ENCODE measurements at regions of chr2 and their contacts with region 1.

Region 1: DNA sequence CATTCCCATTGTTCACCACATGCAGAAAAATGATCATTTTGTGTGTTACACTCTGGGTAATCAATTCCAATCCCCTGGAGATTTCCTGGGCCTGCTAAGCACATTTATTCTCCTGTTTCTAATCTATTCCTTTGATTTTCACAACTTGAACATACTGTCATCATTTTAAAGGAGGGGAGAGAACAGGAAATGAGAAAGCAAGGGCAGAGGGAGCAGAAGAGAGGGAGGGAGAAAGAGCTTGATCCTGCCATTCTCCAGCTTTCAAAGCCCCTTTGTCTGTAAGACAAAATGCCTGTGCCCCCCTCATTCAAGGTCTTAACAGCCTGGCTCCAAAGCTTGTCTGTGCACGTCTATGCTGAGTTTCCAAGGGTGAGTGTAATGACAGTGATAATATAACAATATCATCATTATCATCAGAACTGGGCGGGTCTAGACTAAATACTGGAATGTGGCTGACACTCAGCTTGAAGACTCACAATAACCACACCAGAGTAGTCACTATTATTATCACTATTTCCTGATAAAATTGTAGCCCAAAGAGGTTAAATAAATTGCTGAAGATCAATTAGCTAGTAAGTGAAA is 164.4 kb upstream of the KLHL29 start:
- DNase-seq: no peak
- ATAC-seq: no peak
- H3K4me3 ChIP-seq: no peak overlapping the region
- H3K27ac ChIP-seq: no peak overlapping the region
- H3K4me1 ChIP-seq: no peaks in the 10 kb centered on the region
- H3K27me3 ChIP-seq: peaks cover 33% of the 10 kb centered on the region; the same call in 1 of the 2 replicates
- CTCF ChIP-seq: no peak
- POLR2A ChIP-seq: no peak
- RAD21 ChIP-seq: no peak

Region 2: GRCh38 chr2:23145460-23145859 is 75.1 kb before region 1 on chr2:
- CTCF ChIA-PET with region 1: no interaction called
- POLR2A ChIA-PET with region 1: no interaction called
- RAD21 ChIA-PET with region 1: no interaction called
- intact Hi-C with region 1: no loop called
- DNase-seq: no peak
- ATAC-seq: no peak
- H3K4me3 ChIP-seq: no peak overlapping the region
- H3K27ac ChIP-seq: no peak overlapping the region
- H3K4me1 ChIP-seq: no peaks in the 10 kb centered on the region
- H3K27me3 ChIP-seq: peaks cover 4% of the 10 kb centered on the region; the same call in 1 of the 2 replicates
- CTCF ChIP-seq: no peak
- POLR2A ChIP-seq: no peak
- RAD21 ChIP-seq: no peak

Region 3: DNA sequence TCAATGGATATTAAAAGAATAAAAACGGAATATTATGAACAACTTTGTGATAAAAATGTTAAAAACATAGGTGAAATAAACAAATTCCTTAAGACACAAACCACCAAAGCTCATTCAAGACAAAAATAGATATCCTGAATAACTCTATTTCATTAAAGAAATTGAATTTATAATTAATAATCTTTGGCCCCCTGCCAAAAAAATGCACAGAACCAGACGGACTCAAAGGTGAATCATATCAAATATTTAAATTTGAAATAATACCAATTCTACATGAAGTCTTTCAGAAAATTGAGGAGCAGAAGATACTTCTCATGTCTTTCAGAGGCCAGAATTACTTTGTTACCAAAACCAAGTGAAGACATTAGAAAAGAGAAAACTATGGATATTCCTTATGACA is 36.0 kb after region 1 on chr2:
- CTCF ChIA-PET with region 1: no interaction called
- POLR2A ChIA-PET with region 1: no interaction called
- RAD21 ChIA-PET with region 1: no interaction called
- intact Hi-C with region 1: loop called (anchors 5 kb)
- DNase-seq: no peak
- ATAC-seq: no peak
- H3K4me3 ChIP-seq: no peak overlapping the region
- H3K27ac ChIP-seq: no peak overlapping the region
- H3K4me1 ChIP-seq: no peaks in the 10 kb centered on the region
- H3K27me3 ChIP-seq: peaks cover 43% of the 10 kb centered on the region
- CTCF ChIP-seq: no peak
- POLR2A ChIP-seq: no peak
- RAD21 ChIP-seq: no peak

Measured in HCT116 (cell line).